GM12878 (cell line): ENCODE measurements at regions of chr6 and their contacts with region 1.

Region 1: DNA sequence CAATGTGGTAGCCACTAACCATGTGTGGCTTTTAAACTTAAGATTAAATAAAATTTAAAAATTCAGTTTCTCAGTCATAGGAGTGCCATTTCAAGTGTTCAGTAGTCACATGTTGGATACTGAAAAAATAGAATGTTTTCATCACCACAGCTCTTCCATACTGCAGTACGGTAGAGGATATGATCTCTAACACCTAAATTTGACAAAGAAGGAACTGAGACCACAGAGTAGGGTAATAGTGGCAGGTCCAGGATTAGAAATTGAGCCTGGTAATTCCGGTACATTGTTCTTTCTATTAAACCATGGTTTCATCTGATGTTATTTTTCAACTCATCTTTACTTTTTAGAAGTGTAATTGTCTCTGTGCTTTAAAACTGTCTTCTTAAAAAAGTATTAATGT is 104.0 kb downstream of the CD2AP start:
- DNase-seq: no peak
- ATAC-seq: peak; percentile 83
- H3K4me3 ChIP-seq: no peak overlapping the region
- H3K27ac ChIP-seq: no peak overlapping the region
- H3K4me1 ChIP-seq: no peaks in the 10 kb centered on the region
- H3K27me3 ChIP-seq: no peaks in the 10 kb centered on the region
- CTCF ChIP-seq: no peak
- EP300 ChIP-seq: no peak
- POLR2A ChIP-seq: no peak
- RAD21 ChIP-seq: no peak

Region 2: GRCh38 chr6:47595797-47596196 is 14.2 kb after region 1 on chr6:
- CTCF ChIA-PET with region 1: interaction called, 10 read pairs
- POLR2A ChIA-PET with region 1: interaction called, 4 read pairs
- RAD21 ChIA-PET with region 1: no interaction called
- SMC1A ChIA-PET with region 1: interaction called, 3 read pairs
- in situ Hi-C with region 1: no loop called
- intact Hi-C with region 1: no loop called
- DNase-seq: no peak
- ATAC-seq: no peak
- H3K4me3 ChIP-seq: no peak overlapping the region
- H3K27ac ChIP-seq: no peak overlapping the region
- H3K4me1 ChIP-seq: no peaks in the 10 kb centered on the region
- H3K27me3 ChIP-seq: no peaks in the 10 kb centered on the region
- CTCF ChIP-seq: no peak
- EP300 ChIP-seq: no peak
- POLR2A ChIP-seq: no peak
- RAD21 ChIP-seq: no peak